Dendritic cell treated with granulocyte-macrophage colony-stimulating factor and Interleukin-4, amounts not matched to agents 40 ng/mL and 50 ng/mL, for 4 days (primary cell): ENCODE measurements at regions of chr18 and their contacts with region 1.

Region 1: GRCh38 chr18:74652392-74652988 is 54.8 kb downstream of the ZNF407 start:
- H3K4me3 Mint-ChIP-seq: no peak overlapping the region
- H3K27ac Mint-ChIP-seq: no peak overlapping the region
- H3K4me1 Mint-ChIP-seq: peaks cover 2% of the 10 kb centered on the region
- H3K27me3 Mint-ChIP-seq: no peaks in the 10 kb centered on the region

Region 2: GRCh38 chr18:74331404-74331803 is 321.1 kb before region 1 on chr18:
- intact Hi-C with region 1: no loop called
- H3K4me3 Mint-ChIP-seq: no peak overlapping the region
- H3K27ac Mint-ChIP-seq: no peak overlapping the region
- H3K4me1 Mint-ChIP-seq: peaks cover 13% of the 10 kb centered on the region
- H3K27me3 Mint-ChIP-seq: peaks cover 4% of the 10 kb centered on the region

Region 3: GRCh38 chr18:74459889-74460288 is 192.6 kb before region 1 on chr18:
- intact Hi-C with region 1: no loop called
- H3K4me3 Mint-ChIP-seq: no peak overlapping the region
- H3K27ac Mint-ChIP-seq: no peak overlapping the region
- H3K4me1 Mint-ChIP-seq: peaks cover 18% of the 10 kb centered on the region
- H3K27me3 Mint-ChIP-seq: peaks cover 52% of the 10 kb centered on the region

Region 4: DNA sequence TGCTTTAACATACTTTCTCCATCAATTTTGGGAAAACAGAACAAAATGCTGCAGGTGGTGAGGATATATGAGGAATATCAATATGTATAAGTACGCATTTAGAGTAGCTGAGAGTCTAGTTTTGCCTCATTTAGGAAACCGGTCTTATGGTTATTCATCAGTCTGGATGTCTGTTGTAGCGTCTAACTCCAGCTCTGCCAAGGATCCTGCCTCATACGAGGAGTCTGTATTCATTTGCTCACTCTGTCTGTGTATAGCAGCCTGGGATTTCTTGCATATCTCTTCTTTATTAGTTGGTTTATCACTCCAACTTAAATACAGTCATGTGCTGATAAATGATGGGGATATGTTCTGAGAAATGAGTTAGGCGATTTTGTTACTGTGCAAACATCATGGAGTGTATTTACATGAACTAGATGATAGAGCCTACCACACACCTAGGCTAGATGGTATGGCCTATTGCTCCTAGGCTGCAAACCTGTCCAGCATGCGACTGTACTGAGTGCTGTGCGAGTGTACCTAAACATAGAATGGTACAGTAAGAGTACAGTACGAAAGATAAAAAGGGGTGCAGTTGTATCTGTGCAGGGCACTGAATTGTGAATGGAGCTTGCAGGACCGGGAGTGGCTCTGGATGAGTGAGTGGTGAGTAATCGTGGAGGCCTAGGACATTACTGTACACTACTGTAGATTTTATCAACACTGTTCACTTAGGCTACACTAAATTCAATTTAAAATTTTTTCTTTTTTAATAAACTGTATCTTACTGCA is 93.3 kb after region 1 on chr18:
- intact Hi-C with region 1: no loop called
- H3K4me3 Mint-ChIP-seq: no peak overlapping the region
- H3K27ac Mint-ChIP-seq: no peak overlapping the region
- H3K4me1 Mint-ChIP-seq: peaks cover 5% of the 10 kb centered on the region
- H3K27me3 Mint-ChIP-seq: no peaks in the 10 kb centered on the region

Region 5: GRCh38 chr18:74963820-74964446 is 311.4 kb after region 1 on chr18:
- intact Hi-C with region 1: loop called (anchors 5 kb)
- H3K4me3 Mint-ChIP-seq: no peak overlapping the region
- H3K27ac Mint-ChIP-seq: no peak overlapping the region
- H3K4me1 Mint-ChIP-seq: peaks cover 13% of the 10 kb centered on the region
- H3K27me3 Mint-ChIP-seq: no peaks in the 10 kb centered on the region

Region 6: DNA sequence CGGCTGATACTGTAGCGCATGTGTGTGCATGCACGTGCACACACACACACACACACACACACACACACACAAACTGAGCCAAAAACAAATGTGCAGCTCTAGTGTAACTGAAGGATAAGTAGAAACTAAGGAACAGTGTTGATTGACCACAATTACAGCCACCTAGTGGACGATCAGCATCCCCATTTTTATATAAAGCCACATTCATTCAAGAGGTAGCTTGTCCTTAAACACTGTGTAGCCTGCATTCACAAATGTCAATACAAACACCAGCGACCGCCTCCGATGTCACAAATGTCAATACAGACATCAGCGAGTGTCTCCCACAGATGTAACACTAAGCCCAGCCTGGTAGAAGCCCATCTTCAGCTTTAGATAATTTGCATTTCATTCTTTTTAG is 389.1 kb after region 1 on chr18:
- intact Hi-C with region 1: loop called (anchors 2 kb)
- H3K4me3 Mint-ChIP-seq: no peak overlapping the region
- H3K27ac Mint-ChIP-seq: no peak overlapping the region
- H3K4me1 Mint-ChIP-seq: no peaks in the 10 kb centered on the region
- H3K27me3 Mint-ChIP-seq: no peaks in the 10 kb centered on the region

Region 7: DNA sequence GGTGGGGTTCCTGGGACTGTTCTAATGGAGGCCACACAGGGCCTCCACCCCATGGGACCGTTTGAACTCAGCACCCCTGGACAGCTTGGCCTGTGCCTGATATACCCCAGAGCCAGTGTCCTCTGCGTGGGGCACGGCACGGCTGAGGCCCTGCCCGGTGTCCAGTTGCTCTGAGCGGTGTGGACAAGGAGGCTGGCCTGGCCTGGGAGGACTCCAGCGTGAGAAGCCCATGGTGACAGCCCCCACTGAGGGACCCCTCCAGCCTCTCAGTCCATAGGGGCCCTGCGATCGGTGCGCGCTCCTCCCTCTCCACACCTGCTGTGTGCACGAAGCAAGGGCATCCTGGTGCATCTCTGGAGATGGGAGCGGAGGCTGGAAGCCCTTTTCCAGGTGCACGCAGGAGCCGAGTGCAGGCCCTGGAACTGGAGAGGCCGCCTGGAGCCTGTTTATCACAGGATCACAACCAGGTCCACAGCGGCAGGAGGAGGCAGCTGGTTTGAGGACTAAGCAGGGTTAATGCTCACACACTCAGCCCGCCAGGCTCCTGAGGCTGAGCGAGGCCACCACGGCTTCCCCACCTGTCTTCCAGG is 436.2 kb after region 1 on chr18:
- intact Hi-C with region 1: no loop called
- H3K4me3 Mint-ChIP-seq: no peak overlapping the region
- H3K27ac Mint-ChIP-seq: no peak overlapping the region
- H3K4me1 Mint-ChIP-seq: no peaks in the 10 kb centered on the region
- H3K27me3 Mint-ChIP-seq: peaks cover 4% of the 10 kb centered on the region

Region 8: GRCh38 chr18:75209129-75209950 is 556.9 kb after region 1 on chr18 and contains the start of gene PTGR3:
- intact Hi-C with region 1: loop called (anchors 10 kb)
- H3K4me3 Mint-ChIP-seq: peak within 1 kb of the TSS; percentile 89
- H3K27ac Mint-ChIP-seq: peak within 1 kb of the TSS; percentile 94
- H3K4me1 Mint-ChIP-seq: peaks cover 66% of the 10 kb centered on the region
- H3K27me3 Mint-ChIP-seq: peaks cover 31% of the 10 kb centered on the region

Region 9: DNA sequence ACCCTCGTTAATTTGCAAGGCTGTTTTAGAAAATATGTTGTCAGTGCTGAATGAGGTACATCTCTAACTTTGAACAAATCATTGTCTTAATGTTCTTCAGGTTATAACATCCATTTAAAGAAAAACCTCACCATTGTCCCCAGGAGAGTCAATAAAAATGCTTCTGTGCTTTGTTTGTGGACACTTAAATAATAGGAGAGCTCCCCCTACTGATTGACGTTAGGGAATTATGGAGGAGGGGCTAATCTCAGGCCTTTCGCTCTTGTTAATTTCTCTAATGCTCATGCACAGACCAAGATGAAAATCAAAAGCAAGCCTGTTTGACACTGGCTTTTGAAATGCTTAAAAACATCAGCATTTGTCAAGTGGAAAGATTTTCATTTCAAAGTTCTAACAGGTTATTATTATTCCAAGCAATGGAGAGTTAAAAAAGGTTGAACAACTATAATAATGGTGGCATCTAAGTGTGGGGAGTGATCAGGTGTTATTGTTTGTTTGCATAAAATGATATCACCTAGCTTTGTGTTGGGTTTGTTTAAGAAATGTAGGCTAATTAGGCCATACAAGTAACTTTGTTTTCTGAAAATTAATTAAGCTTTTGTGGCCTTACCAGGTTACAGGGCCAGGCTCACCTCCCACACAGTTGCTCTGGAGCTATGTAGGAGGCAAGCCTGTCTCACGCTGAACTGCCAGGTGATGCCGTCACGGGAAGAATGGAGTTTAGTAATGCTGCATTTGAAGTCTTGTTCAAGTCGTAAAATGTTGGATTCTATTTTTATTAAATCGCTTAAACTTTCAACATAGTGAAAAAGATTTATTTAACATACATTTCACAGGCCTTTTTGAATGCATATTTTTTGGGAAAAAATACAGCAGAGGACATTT is 826.7 kb after region 1 on chr18:
- intact Hi-C with region 1: loop called (anchors 1 kb)
- H3K4me3 Mint-ChIP-seq: no peak overlapping the region
- H3K27ac Mint-ChIP-seq: no peak overlapping the region
- H3K4me1 Mint-ChIP-seq: peaks cover 6% of the 10 kb centered on the region
- H3K27me3 Mint-ChIP-seq: no peaks in the 10 kb centered on the region

Region 10: DNA sequence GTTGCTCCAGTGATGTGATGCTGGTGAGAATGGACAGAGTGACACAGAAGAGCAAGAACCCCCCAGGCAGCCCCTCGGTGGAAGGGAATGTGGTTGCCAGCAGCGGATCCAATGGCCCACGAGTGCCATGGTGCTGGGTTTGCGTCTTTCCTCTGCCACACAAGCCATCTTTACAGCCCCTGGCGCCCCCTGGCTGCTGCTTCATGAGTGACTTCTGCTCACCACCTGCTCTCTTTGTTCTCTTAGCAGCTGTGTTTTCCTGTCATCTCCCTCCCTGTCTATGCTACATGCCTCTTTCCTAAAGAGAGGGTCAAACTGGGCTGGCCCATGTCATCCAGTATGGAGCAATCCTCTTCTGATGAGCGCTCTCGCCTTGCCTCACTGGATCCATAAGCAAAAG is 1075.0 kb after region 1 on chr18:
- intact Hi-C with region 1: loop called (anchors 5 kb)
- H3K4me3 Mint-ChIP-seq: no peak overlapping the region
- H3K27ac Mint-ChIP-seq: no peak overlapping the region
- H3K4me1 Mint-ChIP-seq: no peaks in the 10 kb centered on the region
- H3K27me3 Mint-ChIP-seq: no peaks in the 10 kb centered on the region

Region 11: GRCh38 chr18:76349067-76349715 is 1696.7 kb after region 1 on chr18:
- intact Hi-C with region 1: loop called (anchors 10 kb)
- H3K4me3 Mint-ChIP-seq: no peak overlapping the region
- H3K27ac Mint-ChIP-seq: no peak overlapping the region
- H3K4me1 Mint-ChIP-seq: peaks cover 10% of the 10 kb centered on the region
- H3K27me3 Mint-ChIP-seq: no peaks in the 10 kb centered on the region